ENCODE measurements at regions of chr16 and their contacts with region 1.

Region 1: DNA sequence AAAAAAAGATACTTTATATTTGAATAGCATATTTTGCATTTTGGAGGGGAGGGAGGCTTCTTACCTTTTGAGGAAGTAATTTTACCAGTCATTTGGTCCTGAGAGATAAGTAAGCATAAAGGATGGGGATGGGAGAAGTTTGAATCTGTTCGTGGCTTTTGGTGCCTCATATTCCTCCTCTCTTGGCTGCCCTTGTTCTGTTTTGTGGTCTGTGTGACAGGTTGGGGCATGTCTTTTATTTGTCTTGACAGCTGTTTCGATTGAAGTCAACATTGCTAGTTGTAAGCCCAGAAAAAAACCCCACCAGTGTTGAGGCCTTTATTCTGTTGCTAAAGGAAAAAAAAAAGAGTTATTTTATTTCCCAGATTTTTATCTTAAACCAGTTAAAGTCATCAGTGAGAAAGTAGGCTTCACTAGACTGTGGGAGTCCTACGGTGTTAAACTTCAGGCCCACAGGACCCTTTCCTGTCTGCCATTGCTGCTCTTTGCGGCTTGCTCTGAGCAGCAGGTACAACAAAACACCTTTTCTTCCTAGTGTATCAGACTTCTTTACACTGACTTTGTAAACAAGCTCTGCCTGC is 11.4 kb downstream of the SLC7A6 start:
- DNase-seq: peak; percentile 67
- ATAC-seq: peak; percentile 82
- H3K4me3 Mint-ChIP-seq: peak overlapping the region; percentile 65
- H3K27ac Mint-ChIP-seq: peak overlapping the region; percentile 89
- H3K4me1 Mint-ChIP-seq: peaks cover 72% of the 10 kb centered on the region
- H3K27me3 Mint-ChIP-seq: no peaks in the 10 kb centered on the region

Region 2: DNA sequence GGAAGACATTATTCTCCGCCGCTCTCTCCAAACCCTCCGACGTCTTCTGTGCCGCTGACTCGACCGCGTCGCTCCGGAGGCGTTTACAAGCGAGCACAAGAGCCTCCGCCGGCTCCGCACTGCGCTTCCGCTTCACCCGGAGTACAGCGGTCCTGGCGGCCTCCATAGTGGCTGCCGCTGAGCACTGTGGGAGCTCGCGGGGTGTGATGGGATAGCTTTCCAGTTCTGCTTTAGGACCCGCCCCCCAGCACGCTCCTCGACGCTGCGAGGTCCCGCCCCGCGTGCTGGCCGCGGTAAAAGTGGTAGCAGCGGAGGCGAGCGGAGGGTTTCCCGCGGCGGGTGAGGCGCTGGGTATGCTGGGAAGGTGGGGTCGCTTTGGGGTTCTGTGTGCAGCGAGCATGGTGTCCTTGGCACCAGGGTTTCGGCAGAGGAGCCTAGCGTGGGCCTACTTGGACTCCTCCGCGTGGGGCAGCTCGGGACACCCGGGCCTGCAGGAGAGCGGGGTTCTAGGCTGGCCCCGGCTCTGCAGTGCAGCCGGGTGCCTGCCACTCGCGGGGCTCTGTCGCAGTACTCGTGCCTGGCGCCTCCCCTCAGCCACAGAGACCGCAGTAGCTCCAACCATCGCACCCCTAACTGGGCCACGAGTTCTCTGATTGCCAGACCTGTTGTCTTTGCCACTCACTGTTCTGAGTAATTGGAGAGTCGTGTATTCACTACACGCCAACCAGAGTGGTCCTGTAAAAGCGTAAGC is 35.2 kb after region 1 on chr16 and contains the starts of genes PRMT7 and SLC7A6OS:
- CTCF ChIA-PET with region 1: interaction called, 16 read pairs
- POLR2A ChIA-PET with region 1: interaction called, 3 read pairs
- DNase-seq: peak; percentile 96
- ATAC-seq: peak; percentile 99
- H3K4me3 Mint-ChIP-seq: peak within 1 kb of the TSS; percentile 89
- H3K27ac Mint-ChIP-seq: peak within 1 kb of the TSS; percentile 88
- H3K4me1 Mint-ChIP-seq: peaks cover 44% of the 10 kb centered on the region
- H3K27me3 Mint-ChIP-seq: no peaks in the 10 kb centered on the region
- total RNA-seq, gene PRMT7: 70.4 to 73.2 TPM
- total RNA-seq, gene SLC7A6OS: 26.3 to 30.7 TPM

Region 3: DNA sequence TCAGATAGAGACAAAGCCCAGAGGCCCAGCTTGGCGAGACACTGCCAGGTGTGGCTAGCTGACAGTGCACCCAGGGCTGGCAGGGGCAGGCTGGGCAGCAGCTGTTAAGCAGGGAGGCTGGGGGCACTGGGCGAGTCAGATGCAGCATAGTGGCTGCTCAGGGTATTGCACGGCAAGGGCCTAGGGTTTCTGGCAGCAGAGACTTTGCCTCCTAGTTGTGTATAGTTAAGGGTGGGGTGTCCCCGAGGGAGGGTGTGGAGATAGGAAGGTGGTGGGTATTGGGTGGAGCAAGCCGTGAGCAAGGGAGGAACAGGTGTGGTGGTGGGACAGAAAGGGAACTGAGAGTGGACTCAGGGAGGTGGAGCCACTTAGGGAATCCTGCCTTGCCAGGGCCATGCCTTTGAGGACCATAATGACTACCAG is 106.6 kb after region 1 on chr16:
- CTCF ChIA-PET with region 1: no interaction called
- POLR2A ChIA-PET with region 1: no interaction called
- DNase-seq: peak; percentile 41
- ATAC-seq: peak; percentile 60
- H3K4me3 Mint-ChIP-seq: no peak overlapping the region
- H3K27ac Mint-ChIP-seq: no peak overlapping the region
- H3K4me1 Mint-ChIP-seq: peaks cover 18% of the 10 kb centered on the region
- H3K27me3 Mint-ChIP-seq: peaks cover 39% of the 10 kb centered on the region

Measured in activated CD8-positive, alpha-beta T cell treated with anti-CD3 and anti-CD28 coated beads, Interleukin-2, amount 10 ng/mL, durations not matched to agents 7 days and 5 days (primary cell).